Activated B cell treated with CpG ODN at 0.5 μM for 24 hours (primary cell): ENCODE measurements at regions of chr22 and their contacts with region 1.

Region 1: DNA sequence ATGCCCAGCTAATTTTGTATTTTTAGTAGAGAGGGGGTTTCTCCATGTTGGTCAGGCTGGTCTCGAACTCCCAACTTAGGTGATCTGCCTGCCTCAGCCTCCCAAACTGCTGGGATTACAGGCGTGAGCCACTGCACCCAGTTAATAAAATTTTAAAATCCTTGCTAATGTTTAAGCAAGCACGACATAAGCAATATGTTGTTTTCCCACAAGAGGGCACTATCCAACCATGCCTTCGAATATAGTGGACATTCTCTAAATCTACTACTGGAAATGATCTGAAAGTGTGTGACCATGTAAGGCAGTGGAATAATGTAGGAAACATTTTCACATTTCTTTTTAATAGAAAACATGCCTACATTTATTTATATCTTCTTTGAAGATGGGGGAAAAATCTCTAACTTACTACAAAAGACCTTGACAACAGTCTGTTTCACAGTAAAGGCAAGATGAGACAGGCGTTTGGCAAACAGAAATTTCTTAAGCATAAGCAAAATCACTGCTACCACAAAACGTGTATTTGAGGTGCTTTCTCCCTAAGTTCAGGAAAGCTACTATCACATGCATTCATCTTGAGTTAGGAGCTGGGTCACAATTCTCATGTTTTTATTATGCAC is 38.2 kb downstream of the PITPNB start:
- DNase-seq: no peak
- ATAC-seq: peak; percentile 52
- H3K4me3 Mint-ChIP-seq: no peak overlapping the region
- H3K27ac Mint-ChIP-seq: no peak overlapping the region
- H3K4me1 Mint-ChIP-seq: peaks cover 20% of the 10 kb centered on the region
- H3K27me3 Mint-ChIP-seq: no peaks in the 10 kb centered on the region
- CTCF ChIP-seq: peak; percentile 29

Region 2: DNA sequence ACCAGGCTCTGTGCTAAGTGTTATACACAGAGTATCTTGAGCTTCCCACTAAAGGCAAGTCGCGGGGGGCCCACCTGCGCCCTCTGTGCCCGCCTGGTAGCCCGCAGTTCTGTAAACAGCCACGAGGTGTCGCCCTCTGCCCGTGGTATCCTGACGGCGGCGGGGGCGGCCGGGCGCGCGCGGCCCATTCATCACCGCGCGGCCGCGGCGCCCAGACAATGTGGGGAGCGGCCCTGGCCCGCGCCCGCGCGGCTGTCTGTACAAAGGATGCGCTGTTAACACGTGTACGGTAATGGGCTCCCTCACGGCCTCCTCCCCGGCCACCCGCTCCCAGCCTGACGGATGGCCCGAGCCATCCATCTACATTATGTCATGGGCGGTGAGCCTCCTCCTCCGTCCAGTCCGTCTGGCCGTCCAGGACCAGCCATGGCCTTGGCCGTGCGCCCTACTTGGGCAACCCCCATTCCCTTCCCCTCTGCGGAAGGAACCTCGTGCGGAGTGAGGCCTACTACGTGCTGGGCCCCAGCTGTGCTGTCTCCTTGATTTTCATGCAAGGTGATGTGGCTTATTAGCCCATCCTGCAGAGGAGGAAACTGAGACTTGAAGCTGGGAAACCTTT is 1124.1 kb before region 1 on chr22:
- CTCF ChIA-PET with region 1: no interaction called
- POLR2A ChIA-PET with region 1: no interaction called
- intact Hi-C with region 1: loop called (anchors 2 kb)
- DNase-seq: peak; percentile 38
- ATAC-seq: peak; percentile 47
- H3K4me3 Mint-ChIP-seq: no peak overlapping the region
- H3K27ac Mint-ChIP-seq: no peak overlapping the region
- H3K4me1 Mint-ChIP-seq: no peaks in the 10 kb centered on the region
- H3K27me3 Mint-ChIP-seq: no peaks in the 10 kb centered on the region
- CTCF ChIP-seq: no peak

Region 3: GRCh38 chr22:27919222-27919941 is 38.5 kb after region 1 on chr22 and contains the start of gene PITPNB:
- CTCF ChIA-PET with region 1: interaction called, 7 read pairs
- POLR2A ChIA-PET with region 1: no interaction called
- intact Hi-C with region 1: loop called (anchors 5 kb)
- DNase-seq: peak; percentile 99
- ATAC-seq: peak; percentile 83
- H3K4me3 Mint-ChIP-seq: peak within 1 kb of the TSS; percentile 99
- H3K27ac Mint-ChIP-seq: peak within 1 kb of the TSS; percentile 99
- H3K4me1 Mint-ChIP-seq: peaks cover 56% of the 10 kb centered on the region
- H3K27me3 Mint-ChIP-seq: no peaks in the 10 kb centered on the region
- CTCF ChIP-seq: no peak
- total RNA-seq, gene PITPNB: 77.1 and 82.5 TPM in 2 replicates

Region 4: DNA sequence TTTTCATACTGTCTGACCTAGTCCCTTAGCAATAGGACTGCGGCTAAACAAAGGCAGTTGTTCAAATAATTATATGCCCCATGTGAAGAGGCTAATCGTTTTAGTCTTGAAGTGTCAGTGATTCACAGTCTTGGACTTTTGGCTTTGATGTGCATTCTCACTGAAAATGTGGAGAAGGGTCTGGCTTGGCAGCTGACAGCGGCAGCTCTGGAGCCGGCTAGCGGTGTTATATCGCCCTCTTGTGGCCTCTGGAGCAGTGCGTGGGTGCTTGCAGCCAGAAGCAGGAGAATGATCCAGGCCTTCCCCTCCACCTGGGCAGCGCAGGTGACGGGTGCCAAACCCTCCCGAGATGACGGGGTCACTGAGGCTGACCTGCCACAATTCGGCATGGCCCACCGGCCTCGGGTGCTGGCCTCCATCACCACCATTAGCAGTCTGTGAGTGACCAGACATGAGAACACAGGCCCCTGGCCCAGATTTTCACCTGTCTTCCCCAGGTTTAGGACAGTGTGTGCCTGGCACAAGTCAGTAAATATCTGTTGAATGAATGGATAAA is 128.5 kb after region 1 on chr22:
- CTCF ChIA-PET with region 1: interaction called, 117 read pairs
- POLR2A ChIA-PET with region 1: no interaction called
- intact Hi-C with region 1: loop called (anchors 1 kb)
- DNase-seq: peak; percentile 62
- ATAC-seq: peak; percentile 86
- H3K4me3 Mint-ChIP-seq: no peak overlapping the region
- H3K27ac Mint-ChIP-seq: no peak overlapping the region
- H3K4me1 Mint-ChIP-seq: no peaks in the 10 kb centered on the region
- H3K27me3 Mint-ChIP-seq: no peaks in the 10 kb centered on the region
- CTCF ChIP-seq: peak; percentile 91

Region 5: GRCh38 chr22:28442264-28442710 is 561.4 kb after region 1 on chr22:
- CTCF ChIA-PET with region 1: no interaction called
- POLR2A ChIA-PET with region 1: no interaction called
- intact Hi-C with region 1: loop called (anchors 10 kb)
- DNase-seq: peak; percentile 42
- ATAC-seq: peak; percentile 82
- H3K4me3 Mint-ChIP-seq: peak overlapping the region; percentile 67
- H3K27ac Mint-ChIP-seq: no peak overlapping the region
- H3K4me1 Mint-ChIP-seq: peaks cover 20% of the 10 kb centered on the region
- H3K27me3 Mint-ChIP-seq: peaks cover 31% of the 10 kb centered on the region
- CTCF ChIP-seq: no peak